Sigmoid colon (tissue), 7 donors: ENCODE measurements at regions of chr19 and their contacts with region 1.

Region 1: DNA sequence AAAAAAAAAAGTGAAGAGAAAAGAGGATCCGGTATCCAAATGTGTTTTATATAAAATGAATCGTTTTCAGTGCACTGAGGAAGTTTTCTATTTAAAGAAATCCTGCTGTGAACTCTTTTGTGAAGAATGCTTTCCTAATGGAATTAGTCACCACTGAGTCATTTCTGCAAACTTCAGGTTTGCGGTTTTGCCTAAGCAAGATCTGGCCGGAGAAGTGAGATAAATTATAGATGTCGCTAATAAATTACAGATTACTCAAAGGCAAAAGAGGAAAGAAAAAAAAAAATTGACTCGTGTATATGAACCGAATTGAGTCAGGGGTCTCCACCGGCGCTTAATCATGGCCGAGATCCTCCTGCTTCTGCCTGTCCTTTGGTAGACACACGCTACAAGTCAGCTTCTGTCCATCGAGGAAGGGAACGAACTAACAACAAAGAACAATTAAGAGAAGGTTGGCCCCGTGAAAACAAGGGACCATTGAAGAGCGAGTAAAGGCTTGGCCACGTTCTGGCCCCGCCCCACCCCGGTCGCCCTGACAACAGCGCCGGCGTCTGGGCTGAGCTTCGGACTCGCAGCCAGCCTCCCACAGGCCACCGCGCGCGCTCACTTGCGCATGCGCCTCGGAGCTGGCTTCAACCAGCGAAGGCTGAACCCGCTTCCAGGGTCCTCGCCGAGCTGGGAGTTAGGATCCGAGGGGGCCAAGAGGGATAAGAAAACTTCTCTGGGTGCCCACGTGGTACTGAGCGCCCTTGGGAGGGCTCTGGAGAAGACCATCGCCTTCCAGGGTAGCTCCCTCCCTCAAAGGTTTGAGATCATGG is 33.0 kb upstream of the MRI1 start:
- DNase-seq: peak; percentile 97
- H3K4me3 ChIP-seq: peak overlapping the region; percentile 46 to 57 (median 52)
- H3K27ac ChIP-seq: peak overlapping the region; percentile 85 to 93 (median 86)
- H3K4me1 ChIP-seq: peaks cover 0 to 23% (median 15%) of the 10 kb centered on the region in 4 donors
- H3K27me3 ChIP-seq: no peaks in the 10 kb centered on the region
- CTCF ChIP-seq: no peak
- EP300 ChIP-seq: peak in 1 of 4 donors; percentile 68
- POLR2A ChIP-seq: peak in 1 of 2 donors; percentile 42

Region 2: DNA sequence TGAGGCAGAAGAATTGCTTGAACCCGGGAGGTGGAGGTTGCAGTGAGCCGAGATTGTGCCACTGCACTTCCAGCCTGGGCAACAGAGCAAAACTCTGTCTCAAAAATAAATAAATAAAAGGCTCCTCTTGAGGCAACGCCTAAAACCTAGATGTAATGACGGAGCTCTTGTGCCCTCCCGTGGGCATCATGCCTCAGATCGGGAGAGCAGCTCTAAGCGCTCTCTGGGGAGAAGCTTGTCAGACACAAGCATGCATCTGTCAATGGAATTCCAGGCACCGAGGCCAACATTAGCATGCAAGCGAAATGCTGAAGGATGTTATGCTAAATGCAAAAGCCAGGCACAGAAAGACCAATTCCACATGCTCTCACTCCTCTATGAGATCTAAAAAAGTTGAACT is 12.6 kb before region 1 on chr19:
- intact Hi-C with region 1: no loop called
- DNase-seq: no peak
- H3K4me3 ChIP-seq: no peak overlapping the region
- H3K27ac ChIP-seq: no peak overlapping the region
- H3K4me1 ChIP-seq: no peaks in the 10 kb centered on the region
- H3K27me3 ChIP-seq: peaks cover 0 to 11% (median 0%) of the 10 kb centered on the region in 3 donors
- CTCF ChIP-seq: no peak
- EP300 ChIP-seq: no peak
- POLR2A ChIP-seq: no peak

Region 3: DNA sequence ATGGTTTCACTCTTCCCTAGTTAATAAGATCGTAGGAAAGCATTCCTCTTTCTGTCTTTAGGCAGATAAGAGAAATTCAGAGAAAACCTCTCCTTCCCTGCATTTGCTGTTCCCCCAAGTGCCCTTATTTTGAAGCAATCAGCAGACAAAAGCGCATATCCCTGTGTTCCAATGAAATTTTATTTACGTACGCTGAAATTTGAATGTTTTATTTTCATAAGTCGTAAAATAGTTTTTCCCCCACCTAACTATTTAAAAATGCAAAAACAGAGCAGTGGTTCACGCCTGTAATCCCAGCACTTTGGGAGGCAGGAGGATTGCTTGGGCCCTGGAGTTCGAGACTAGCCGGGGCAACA is 15.7 kb after region 1 on chr19:
- intact Hi-C with region 1: loop called (anchors 2 kb)
- DNase-seq: no peak
- H3K4me3 ChIP-seq: peak overlapping the region; percentile 72 to 93 (median 87)
- H3K27ac ChIP-seq: peak overlapping the region; percentile 87 to 92 (median 90)
- H3K4me1 ChIP-seq: peaks cover 0 to 17% (median 13%) of the 10 kb centered on the region in 4 donors
- H3K27me3 ChIP-seq: no peaks in the 10 kb centered on the region
- CTCF ChIP-seq: no peak
- EP300 ChIP-seq: no peak
- POLR2A ChIP-seq: no peak